ENCODE measurements at regions of chr1 and their contacts with region 1.

Region 1: DNA sequence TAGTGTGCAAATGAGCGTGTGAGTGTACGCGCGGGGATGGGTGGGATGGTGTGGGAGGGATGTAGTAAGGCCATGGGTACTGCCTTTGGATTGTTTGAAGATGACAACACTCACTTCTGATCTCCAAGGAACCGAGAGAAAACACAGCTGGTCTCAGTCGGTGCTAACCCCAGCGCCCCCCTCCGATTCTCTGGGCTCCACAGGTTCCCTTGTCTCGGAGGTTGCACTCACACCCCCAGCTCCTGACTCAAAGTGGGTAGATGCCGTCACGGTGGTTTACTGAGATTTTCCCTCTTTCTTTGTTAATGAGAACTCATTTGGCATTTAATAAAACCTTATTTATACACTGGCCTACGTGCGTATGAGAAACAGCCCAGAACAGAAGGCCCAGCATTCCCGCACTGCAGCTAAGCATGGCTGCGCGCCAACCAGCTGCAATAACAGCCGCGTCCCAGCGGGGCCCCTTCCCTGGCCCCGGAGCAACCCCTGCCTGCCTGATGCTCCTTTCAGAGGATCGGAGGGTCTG is 25.8 kb downstream of the ABCA4 start:
- DNase-seq: peak; percentile 97
- H3K4me3 ChIP-seq: no peak overlapping the region
- H3K27ac ChIP-seq: peak overlapping the region; percentile 91
- H3K4me1 ChIP-seq: peaks cover 56% of the 10 kb centered on the region
- H3K27me3 ChIP-seq: no peaks in the 10 kb centered on the region
- CTCF ChIP-seq: no peak
- POLR2A ChIP-seq: peak; percentile 5

Region 2: GRCh38 chr1:93758842-93759515 is 336.2 kb before region 1 on chr1:
- CTCF ChIA-PET with region 1: no interaction called
- POLR2A ChIA-PET with region 1: no interaction called
- dilution Hi-C with region 1: no loop called
- intact Hi-C with region 1: no loop called
- DNase-seq: peak; percentile 15
- H3K4me3 ChIP-seq: no peak overlapping the region
- H3K27ac ChIP-seq: no peak overlapping the region
- H3K4me1 ChIP-seq: peaks cover 11% of the 10 kb centered on the region
- H3K27me3 ChIP-seq: no peaks in the 10 kb centered on the region
- CTCF ChIP-seq: no peak
- POLR2A ChIP-seq: no peak

Region 3: DNA sequence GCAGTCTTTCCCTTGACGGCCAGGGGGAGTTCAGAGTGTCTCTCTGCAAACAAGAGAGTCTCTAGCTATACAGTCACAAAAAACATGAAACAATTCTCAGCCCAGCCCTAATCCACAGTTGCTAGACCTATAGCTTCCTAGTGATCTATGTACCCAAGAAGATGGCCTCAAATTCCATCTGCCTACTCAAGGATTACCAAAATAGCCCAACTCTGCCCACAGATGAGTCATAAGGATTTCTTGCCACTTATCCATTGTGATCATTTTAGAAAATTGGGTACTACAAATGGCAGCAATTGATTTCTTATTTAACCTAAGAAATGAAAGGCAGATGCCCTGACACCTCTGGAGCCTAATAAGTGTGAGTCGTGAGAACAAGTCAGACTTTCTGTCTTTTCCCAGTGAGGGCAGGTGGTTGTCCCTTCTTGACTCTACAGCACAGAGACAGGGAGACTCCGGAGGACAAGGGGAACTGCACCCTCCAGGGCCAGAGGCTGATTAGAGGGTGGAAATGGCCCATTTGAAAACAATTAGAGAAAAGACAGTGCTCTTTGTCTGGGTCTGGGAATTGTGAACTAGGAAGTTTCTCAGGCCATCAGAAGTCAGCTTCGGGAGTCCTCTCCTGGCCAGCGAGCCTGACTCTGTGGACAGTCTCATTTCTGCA is 39.6 kb before region 1 on chr1:
- CTCF ChIA-PET with region 1: no interaction called
- POLR2A ChIA-PET with region 1: no interaction called
- dilution Hi-C with region 1: no loop called
- intact Hi-C with region 1: no loop called
- DNase-seq: no peak
- H3K4me3 ChIP-seq: no peak overlapping the region
- H3K27ac ChIP-seq: no peak overlapping the region
- H3K4me1 ChIP-seq: peaks cover 7% of the 10 kb centered on the region
- H3K27me3 ChIP-seq: no peaks in the 10 kb centered on the region
- CTCF ChIP-seq: no peak
- POLR2A ChIP-seq: no peak

Region 4: DNA sequence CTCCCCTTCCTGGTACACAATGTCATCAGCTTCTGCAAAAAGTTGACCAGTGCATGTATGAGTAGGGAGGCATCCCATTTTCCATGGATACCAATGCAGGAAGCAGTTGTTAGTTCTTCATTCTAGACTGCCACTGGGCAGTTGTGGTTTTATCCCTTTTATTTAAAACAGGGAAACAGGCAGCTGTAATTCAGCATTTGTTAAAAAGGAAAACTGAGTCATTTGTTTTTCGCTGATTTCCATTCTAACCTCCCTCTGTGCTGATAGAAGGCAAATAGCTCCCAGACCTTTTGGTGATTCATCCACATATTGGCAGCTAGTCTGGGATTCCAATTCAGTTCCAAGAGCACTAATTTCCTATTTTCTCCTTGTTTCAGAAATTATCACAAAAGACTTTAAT is 46.8 kb after region 1 on chr1:
- CTCF ChIA-PET with region 1: interaction called, 16 read pairs
- POLR2A ChIA-PET with region 1: no interaction called
- dilution Hi-C with region 1: no loop called
- intact Hi-C with region 1: loop called (anchors 1 kb)
- DNase-seq: peak; percentile 98
- H3K4me3 ChIP-seq: no peak overlapping the region
- H3K27ac ChIP-seq: peak overlapping the region; percentile 84
- H3K4me1 ChIP-seq: peaks cover 22% of the 10 kb centered on the region
- H3K27me3 ChIP-seq: no peaks in the 10 kb centered on the region
- CTCF ChIP-seq: no peak
- POLR2A ChIP-seq: no peak

Region 5: GRCh38 chr1:94160811-94161210 is 65.6 kb after region 1 on chr1:
- CTCF ChIA-PET with region 1: interaction called, 3 read pairs
- POLR2A ChIA-PET with region 1: no interaction called
- dilution Hi-C with region 1: no loop called
- intact Hi-C with region 1: loop called (anchors 1 kb)
- DNase-seq: peak; percentile 76
- H3K4me3 ChIP-seq: no peak overlapping the region
- H3K27ac ChIP-seq: peak overlapping the region; percentile 23
- H3K4me1 ChIP-seq: peaks cover 5% of the 10 kb centered on the region
- H3K27me3 ChIP-seq: no peaks in the 10 kb centered on the region
- CTCF ChIP-seq: no peak
- POLR2A ChIP-seq: no peak